ENCODE measurements at regions of chr18 and their contacts with region 1.

Region 1: GRCh38 chr18:21727702-21728101 is 12.9 kb upstream of the MIB1 start:
- DNase-seq: no peak
- H3K27ac ChIP-seq: no peak overlapping the region
- CTCF ChIP-seq: no peak

Region 2: GRCh38 chr18:21452796-21453510 is 274.7 kb before region 1 on chr18:
- CTCF ChIA-PET with region 1: no interaction called
- POLR2A ChIA-PET with region 1: no interaction called
- DNase-seq: no peak
- H3K27ac ChIP-seq: no peak overlapping the region
- CTCF ChIP-seq: no peak

Region 3: DNA sequence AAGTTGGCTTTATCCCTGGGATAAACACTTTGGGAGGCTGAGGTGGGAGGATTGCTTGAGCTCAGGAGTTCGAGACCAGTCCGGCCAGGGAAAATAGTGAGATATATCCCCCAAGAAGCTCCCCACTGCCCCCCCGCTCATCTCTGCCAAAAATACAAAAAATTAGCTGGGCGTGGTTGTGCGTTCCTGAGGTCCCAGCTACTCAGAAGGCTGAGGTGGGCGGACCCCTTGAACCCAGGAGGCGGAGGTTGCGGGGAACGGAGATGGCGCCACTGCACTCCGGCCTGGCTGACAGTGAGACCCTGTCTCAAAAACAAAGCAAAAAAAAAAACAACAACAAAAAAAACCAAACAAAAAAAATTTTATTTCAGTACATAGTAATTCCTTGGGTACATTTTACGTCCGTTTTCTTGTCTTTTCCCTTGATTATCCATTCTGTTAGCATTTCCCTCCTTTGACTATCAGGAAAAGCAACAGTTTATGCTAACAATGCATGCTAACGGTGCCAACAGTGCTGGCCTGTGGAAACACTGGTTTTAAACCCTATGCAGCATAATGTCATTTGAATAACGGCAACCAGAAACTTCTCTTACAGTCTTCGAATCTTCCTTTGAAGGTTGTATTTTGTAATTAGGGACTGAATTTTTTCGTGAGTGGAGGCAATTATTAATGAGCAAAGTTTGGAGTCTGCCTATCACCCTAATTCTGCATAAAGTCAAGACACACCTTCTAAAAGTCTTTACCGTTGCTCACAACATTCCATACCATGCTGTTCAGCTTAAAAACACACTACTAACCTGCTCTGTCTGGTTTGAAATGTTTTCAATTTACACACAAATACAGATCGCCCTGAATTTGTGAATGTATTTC is 12.1 kb after region 1 on chr18:
- CTCF ChIA-PET with region 1: no interaction called
- POLR2A ChIA-PET with region 1: interaction called, 10 read pairs
- DNase-seq: peak; percentile 23
- H3K27ac ChIP-seq: peak overlapping the region; percentile 97
- CTCF ChIP-seq: no peak

Region 4: DNA sequence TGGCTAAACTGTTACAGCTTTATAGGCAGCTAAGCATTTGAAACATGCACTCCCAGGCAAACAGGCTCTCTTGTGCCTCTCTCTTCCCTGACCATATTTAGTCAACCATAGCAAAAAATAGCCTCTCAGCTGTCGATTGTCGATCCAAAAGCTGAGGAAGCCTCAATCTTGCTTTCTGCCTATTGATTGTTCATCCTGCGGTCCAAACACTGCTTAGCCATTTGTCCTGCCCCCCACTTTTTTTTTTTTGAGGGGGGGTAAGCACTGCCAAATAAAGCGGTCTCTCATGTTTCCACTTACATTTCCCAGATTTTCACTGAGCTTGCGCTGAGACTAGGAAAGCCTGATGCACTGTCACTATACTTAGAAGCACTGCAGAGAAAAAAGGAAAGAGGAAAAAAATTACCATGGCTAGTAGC is 103.7 kb after region 1 on chr18:
- CTCF ChIA-PET with region 1: no interaction called
- POLR2A ChIA-PET with region 1: no interaction called
- DNase-seq: no peak
- H3K27ac ChIP-seq: no peak overlapping the region
- CTCF ChIP-seq: no peak

Measured in RWPE1 (cell line).